WTC11 (cell line): ENCODE measurements at regions of chr12 and their contacts with region 1.

Region 1: DNA sequence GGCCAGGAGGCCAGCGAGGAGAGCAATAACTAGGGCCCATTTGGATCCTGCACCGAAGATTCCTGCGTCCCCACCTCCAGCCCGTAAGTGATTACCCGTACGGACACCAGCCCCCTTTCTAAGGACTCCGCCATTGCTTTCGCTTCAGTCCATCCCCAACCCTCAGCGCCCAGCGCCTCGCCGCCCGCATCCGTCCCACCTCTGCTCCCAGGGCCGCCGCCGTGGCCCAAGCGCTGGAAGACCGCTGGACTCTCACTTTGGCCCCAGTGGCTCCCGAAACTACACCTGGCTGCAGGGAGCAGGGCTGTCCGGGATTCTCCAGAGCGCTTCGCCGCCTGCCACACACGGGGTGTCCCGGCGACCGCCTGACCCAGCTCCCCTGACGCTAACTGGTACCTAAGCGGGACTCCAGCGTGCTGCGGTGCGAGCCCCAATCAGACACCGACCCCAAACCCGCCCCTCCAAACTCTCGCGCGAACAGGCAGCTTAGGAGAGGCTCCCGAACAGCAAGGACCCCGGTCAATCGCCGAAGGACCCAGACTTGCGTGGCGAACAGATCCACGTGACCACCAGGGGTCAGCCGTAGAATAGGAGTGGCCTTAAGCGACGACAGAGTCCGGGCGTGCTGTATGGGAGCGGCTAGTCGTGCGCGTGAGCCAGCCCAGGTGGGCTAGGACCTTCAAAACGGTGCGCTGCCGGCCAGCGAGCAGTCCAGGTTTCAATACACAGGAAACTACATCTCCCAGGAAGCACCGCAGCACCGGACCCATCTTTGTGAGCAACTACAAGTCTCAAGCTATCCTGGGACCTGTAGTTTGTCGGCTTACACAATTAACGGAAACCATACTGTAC is at the start of gene CNPY2:
- DNase-seq: peak; percentile 97
- ATAC-seq: peak; percentile 94
- H3K4me3 Mint-ChIP-seq: peak within 1 kb of the TSS; percentile 98
- H3K27ac Mint-ChIP-seq: peak within 1 kb of the TSS; percentile 99
- H3K4me1 Mint-ChIP-seq: peaks cover 8% of the 10 kb centered on the region
- H3K27me3 Mint-ChIP-seq: no peaks in the 10 kb centered on the region
- CTCF ChIP-seq: no peak
- total RNA-seq, gene CNPY2: 171 to 193 TPM (median 192 TPM) in 3 replicates

Region 2: GRCh38 chr12:56084958-56085543 is 230.8 kb before region 1 on chr12:
- CTCF ChIA-PET with region 1: no interaction called
- POLR2A ChIA-PET with region 1: no interaction called
- DNase-seq: peak; percentile 74
- ATAC-seq: peak; percentile 50
- H3K4me3 Mint-ChIP-seq: no peak overlapping the region
- H3K27ac Mint-ChIP-seq: no peak overlapping the region; the same call in 1 of the 2 replicates
- H3K4me1 Mint-ChIP-seq: peaks cover 15% of the 10 kb centered on the region
- H3K27me3 Mint-ChIP-seq: no peaks in the 10 kb centered on the region
- CTCF ChIP-seq: peak; percentile 40; the same call in 1 of the 2 replicates

Region 3: DNA sequence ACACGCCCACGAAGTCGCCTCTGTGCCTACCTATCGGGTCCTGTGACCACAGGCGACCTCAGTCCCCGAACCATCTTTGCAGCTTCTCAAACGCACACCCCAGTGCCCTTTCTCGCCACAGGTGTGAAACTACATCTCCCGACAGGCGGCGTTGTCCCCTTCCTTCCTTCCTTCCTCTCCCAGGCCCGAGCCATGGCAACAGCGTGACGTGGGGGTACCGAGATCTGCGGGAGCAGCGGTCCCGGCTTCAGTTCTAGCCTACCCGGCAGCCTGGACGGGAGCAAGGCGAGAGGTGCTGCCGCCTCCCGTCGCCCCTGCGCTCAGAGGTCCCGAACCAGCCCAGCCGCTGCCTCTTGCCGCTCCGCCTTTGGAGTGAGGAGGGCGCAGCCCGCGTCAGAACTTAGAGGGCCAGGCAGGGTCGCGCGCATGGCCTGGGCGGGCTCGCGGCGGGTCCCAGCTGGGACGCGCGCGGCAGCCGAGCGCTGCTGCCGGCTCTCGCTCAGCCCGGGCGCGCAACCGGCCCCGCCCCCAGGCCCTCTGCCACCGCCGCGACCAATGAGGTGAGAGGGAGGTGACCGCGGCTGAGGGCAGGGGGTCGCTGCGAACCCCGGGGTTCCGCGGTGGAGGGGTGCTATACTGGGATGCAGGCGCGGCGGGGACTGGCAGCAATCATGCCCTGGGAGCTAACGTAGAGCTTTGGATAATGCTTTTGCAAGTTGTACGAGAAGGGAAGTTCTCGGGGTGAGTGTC is 49.0 kb before region 1 on chr12 and contains the start of gene COQ10A:
- CTCF ChIA-PET with region 1: interaction called, 10 read pairs
- POLR2A ChIA-PET with region 1: interaction called, 4 read pairs
- DNase-seq: peak; percentile 92
- ATAC-seq: peak; percentile 87
- H3K4me3 Mint-ChIP-seq: peak within 1 kb of the TSS; percentile 84
- H3K27ac Mint-ChIP-seq: peak within 1 kb of the TSS; percentile 97
- H3K4me1 Mint-ChIP-seq: peaks cover 14% of the 10 kb centered on the region
- H3K27me3 Mint-ChIP-seq: no peaks in the 10 kb centered on the region
- CTCF ChIP-seq: no peak
- total RNA-seq, gene COQ10A: 22.7 to 26.2 TPM (median 24.4 TPM) in 3 replicates

Region 4: GRCh38 chr12:56338308-56339157 is 22.7 kb after region 1 on chr12 and contains the start of gene IL23A:
- CTCF ChIA-PET with region 1: interaction called, 8 read pairs
- POLR2A ChIA-PET with region 1: interaction called, 13 read pairs
- DNase-seq: peak; percentile 68
- ATAC-seq: peak; percentile 46
- H3K4me3 Mint-ChIP-seq: peak within 1 kb of the TSS; percentile 62
- H3K27ac Mint-ChIP-seq: peak within 1 kb of the TSS; percentile 99
- H3K4me1 Mint-ChIP-seq: peaks cover 34% of the 10 kb centered on the region
- H3K27me3 Mint-ChIP-seq: no peaks in the 10 kb centered on the region
- CTCF ChIP-seq: no peak
- total RNA-seq, gene IL23A: 2.9 to 3.0 TPM (median 2.9 TPM) in 3 replicates

Region 5: GRCh38 chr12:56346703-56347102 is 30.9 kb after region 1 on chr12:
- CTCF ChIA-PET with region 1: interaction called, 24 read pairs
- POLR2A ChIA-PET with region 1: no interaction called
- DNase-seq: peak; percentile 62
- ATAC-seq: peak; percentile 88
- H3K4me3 Mint-ChIP-seq: no peak overlapping the region
- H3K27ac Mint-ChIP-seq: peak overlapping the region; percentile 60
- H3K4me1 Mint-ChIP-seq: no peaks in the 10 kb centered on the region
- H3K27me3 Mint-ChIP-seq: no peaks in the 10 kb centered on the region
- CTCF ChIP-seq: 0 out of 2 replicates have a peak, but pooled peaks have one; percentile 17

Region 6: GRCh38 chr12:56461235-56462159 is 145.6 kb after region 1 on chr12:
- CTCF ChIA-PET with region 1: interaction called, 59 read pairs
- POLR2A ChIA-PET with region 1: interaction called, 6 read pairs
- DNase-seq: no peak
- ATAC-seq: no peak
- H3K4me3 Mint-ChIP-seq: no peak overlapping the region
- H3K27ac Mint-ChIP-seq: no peak overlapping the region
- H3K4me1 Mint-ChIP-seq: peaks cover 17% of the 10 kb centered on the region
- H3K27me3 Mint-ChIP-seq: peaks cover 5% of the 10 kb centered on the region
- CTCF ChIP-seq: no peak

Region 7: DNA sequence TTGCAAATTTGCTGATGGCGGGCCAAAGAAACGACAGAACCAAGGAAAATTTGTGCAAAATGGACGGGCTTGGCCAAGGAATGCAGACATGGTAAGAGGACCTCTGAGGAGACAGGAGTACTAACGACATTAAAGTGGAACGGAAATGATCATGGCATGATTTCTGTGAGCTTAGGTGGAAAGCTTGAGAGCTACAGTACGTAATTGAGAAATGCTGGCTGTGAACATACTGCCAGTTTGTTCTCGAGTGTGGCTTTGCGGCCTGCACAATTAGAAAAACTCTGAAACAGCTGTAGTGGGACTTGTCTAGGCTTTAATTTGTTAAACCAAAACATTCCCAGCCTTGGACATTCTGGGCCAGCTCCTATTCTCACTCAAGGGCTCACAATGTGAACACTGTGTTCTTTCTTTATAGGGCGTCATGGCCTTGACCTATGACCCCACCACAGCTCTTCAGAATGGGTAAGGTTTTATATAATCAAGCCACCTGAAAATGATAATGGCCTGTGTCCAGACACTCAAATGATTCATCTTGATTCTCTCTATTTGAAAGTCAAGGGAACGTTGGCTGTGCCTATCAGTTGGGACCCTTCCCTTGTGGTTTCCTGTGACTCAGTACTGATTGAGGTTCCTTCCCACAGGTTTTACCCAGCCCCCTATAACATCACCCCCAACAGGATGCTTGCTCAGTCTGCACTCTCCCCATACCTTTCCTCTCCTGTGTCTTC is 265.7 kb after region 1 on chr12:
- CTCF ChIA-PET with region 1: no interaction called
- POLR2A ChIA-PET with region 1: no interaction called
- DNase-seq: no peak
- ATAC-seq: peak; percentile 60
- H3K4me3 Mint-ChIP-seq: no peak overlapping the region
- H3K27ac Mint-ChIP-seq: peak overlapping the region; percentile 72; the same call in 1 of the 2 replicates
- H3K4me1 Mint-ChIP-seq: peaks cover 7% of the 10 kb centered on the region
- H3K27me3 Mint-ChIP-seq: no peaks in the 10 kb centered on the region
- CTCF ChIP-seq: no peak